PC-3 (cell line): ENCODE measurements at regions of chr10 and their contacts with region 1.

Region 1: DNA sequence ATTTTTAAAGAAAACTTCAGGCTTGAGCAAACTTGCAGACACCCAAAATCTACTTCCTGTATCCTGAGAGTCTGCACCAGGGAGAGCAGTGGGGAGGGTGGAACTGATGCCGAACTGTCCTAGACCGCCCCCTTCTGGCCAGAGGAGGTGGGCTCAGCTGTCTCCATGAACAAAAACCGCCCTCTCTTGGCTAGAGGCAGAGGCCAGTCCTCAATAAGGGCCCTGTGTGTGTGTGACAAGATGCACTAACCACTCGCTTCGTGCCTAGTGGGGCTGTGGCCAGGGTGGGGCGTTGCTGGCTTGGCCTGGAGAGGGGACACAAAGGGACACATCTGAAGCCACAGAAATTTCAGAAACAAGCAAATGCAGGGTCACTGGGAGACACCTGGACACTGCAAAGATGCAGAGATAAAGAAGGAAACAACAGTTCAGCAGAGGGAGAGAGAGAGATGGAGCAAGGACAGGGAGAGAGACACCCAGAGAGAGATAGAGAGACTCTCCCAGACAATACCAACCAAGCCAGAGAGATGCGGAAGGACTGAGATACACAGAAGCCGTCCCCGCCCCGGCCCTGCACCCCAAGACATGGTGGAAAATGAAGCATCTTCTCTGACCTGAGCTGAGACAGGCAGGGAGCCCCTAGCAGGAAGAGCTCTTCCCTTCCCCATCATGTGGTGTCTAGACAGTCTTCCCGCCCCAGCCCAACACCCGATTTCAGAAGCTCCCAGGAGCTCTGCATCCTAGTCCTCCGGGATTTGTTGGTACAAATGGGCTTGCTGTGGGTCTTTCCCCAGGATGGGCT is 22.7 kb upstream of the FXYD4 start:
- DNase-seq: peak; percentile 91
- ATAC-seq: peak; percentile 99
- H3K4me3 ChIP-seq: no peak overlapping the region
- H3K27ac ChIP-seq: no peak overlapping the region
- H3K4me1 ChIP-seq: peaks cover 28% of the 10 kb centered on the region
- H3K27me3 ChIP-seq: no peaks in the 10 kb centered on the region
- CTCF ChIP-seq: peak; percentile 99

Region 2: DNA sequence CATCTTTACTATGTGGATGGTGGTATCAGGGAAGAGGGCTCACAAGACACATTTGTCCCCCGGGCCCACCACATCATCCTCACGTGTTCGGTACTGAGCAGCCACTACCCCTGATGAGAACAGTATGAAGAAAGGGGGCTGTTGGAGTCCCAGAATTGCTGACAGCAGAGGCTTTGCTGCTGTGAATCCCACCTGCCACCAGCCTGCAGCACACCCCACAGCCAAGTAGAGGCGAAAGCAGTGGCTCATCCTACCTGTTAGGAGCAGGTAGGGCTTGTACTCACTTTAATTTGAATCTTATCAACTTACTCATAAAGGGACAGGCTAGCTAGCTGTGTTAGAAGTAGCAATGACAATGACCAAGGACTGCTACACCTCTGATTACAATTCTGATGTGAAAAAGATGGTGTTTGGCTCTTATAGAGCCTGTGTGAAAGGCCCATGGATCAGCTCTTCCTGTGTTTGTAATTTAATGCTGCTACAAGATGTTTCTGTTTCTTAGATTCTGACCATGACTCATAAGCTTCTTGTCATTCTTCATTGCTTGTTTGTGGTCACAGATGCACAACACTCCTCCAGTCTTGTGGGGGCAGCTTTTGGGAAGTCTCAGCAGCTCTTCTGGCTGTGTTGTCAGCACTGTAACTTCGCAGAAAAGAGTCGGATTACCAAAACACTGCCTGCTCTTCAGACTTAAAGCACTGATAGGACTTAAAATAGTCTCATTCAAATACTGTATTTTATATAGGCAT is 219.6 kb before region 1 on chr10:
- CTCF ChIA-PET with region 1: no interaction called
- POLR2A ChIA-PET with region 1: no interaction called
- intact Hi-C with region 1: no loop called
- DNase-seq: peak; percentile 84
- ATAC-seq: peak; percentile 93
- H3K4me3 ChIP-seq: no peak overlapping the region
- H3K27ac ChIP-seq: 0 out of 2 replicates have a peak overlapping the region, but pooled peaks have one; percentile 10
- H3K4me1 ChIP-seq: peaks cover 20% of the 10 kb centered on the region
- H3K27me3 ChIP-seq: no peaks in the 10 kb centered on the region
- CTCF ChIP-seq: peak; percentile 21; the same call in 1 of the 2 replicates

Region 3: DNA sequence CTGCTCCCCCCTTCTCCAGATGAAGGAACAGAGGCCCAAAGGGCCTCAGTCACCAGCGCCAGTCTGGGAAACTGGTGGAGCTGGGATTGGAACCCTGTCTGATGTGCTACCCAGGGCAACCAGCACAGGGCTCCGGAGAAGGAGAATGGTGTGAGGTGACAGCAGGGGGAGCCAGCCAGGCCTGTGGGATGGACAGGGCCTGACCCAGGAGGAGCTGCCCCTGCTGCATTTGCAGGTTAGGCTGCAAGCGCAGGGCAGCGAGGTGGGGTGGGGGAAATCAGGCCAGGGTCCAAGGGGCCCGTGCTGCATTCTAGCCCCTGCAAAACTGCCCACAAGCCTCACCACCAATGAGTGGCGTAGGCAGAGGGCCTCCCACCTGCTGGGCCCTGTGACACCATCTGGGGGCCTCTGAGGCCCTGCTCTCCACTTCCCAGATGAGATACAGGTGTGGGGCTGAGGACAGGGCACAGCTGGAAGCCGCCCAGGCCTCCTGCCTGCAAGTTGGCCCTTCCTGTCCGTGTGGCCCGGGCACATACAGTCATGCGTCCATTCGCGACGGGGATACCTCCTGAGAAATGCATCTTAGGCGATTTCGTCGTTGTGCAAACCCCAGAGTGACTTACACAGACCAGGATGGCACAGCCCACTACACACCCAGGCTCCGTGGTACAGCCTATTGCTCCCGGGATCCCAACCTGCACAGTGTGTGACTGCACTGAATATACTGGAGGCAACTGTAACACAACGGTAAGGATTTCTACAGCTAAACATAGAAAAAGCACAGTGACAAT is 127.1 kb before region 1 on chr10:
- CTCF ChIA-PET with region 1: no interaction called
- POLR2A ChIA-PET with region 1: no interaction called
- intact Hi-C with region 1: loop called (anchors 10 kb)
- DNase-seq: peak; percentile 17
- ATAC-seq: peak; percentile 55; the same call in 1 of the 2 replicates
- H3K4me3 ChIP-seq: no peak overlapping the region
- H3K27ac ChIP-seq: no peak overlapping the region
- H3K4me1 ChIP-seq: no peaks in the 10 kb centered on the region
- H3K27me3 ChIP-seq: peaks cover 13% of the 10 kb centered on the region; the same call in 1 of the 2 replicates
- CTCF ChIP-seq: peak; percentile 49

Region 4: GRCh38 chr10:43265799-43266721 is 82.7 kb before region 1 on chr10:
- CTCF ChIA-PET with region 1: no interaction called
- POLR2A ChIA-PET with region 1: no interaction called
- intact Hi-C with region 1: loop called (anchors 1 kb)
- DNase-seq: peak; percentile 57
- ATAC-seq: peak; percentile 88
- H3K4me3 ChIP-seq: 0 out of 2 replicates have a peak overlapping the region, but pooled peaks have one; percentile 9
- H3K27ac ChIP-seq: no peak overlapping the region
- H3K4me1 ChIP-seq: no peaks in the 10 kb centered on the region
- H3K27me3 ChIP-seq: peaks cover 64% of the 10 kb centered on the region
- CTCF ChIP-seq: peak; percentile 60

Region 5: GRCh38 chr10:43292755-43293676 is 55.7 kb before region 1 on chr10:
- CTCF ChIA-PET with region 1: interaction called, 10 read pairs
- POLR2A ChIA-PET with region 1: no interaction called
- intact Hi-C with region 1: loop called (anchors 1 kb)
- DNase-seq: peak; percentile 78
- ATAC-seq: peak; percentile 92
- H3K4me3 ChIP-seq: no peak overlapping the region
- H3K27ac ChIP-seq: no peak overlapping the region
- H3K4me1 ChIP-seq: peaks cover 10% of the 10 kb centered on the region
- H3K27me3 ChIP-seq: peaks cover 8% of the 10 kb centered on the region
- CTCF ChIP-seq: peak; percentile 93